ENCODE measurements at regions of chr17 and their contacts with region 1.

Region 1: GRCh38 chr17:20315821-20316220 is 151.5 kb downstream of the LGALS9B start:
- DNase-seq: no peak
- ATAC-seq: no peak
- H3K4me3 ChIP-seq: no peak overlapping the region
- H3K27ac ChIP-seq: no peak overlapping the region
- H3K4me1 ChIP-seq: no peaks in the 10 kb centered on the region
- H3K27me3 ChIP-seq: no peaks in the 10 kb centered on the region
- CTCF ChIP-seq: no peak

Region 2: GRCh38 chr17:19992803-19993713 is 322.8 kb before region 1 on chr17:
- intact Hi-C with region 1: loop called in 1 of 3 experiments (anchors 5 kb)
- DNase-seq: peak; percentile 83 to 96 (median 91)
- ATAC-seq: peak; percentile 100
- H3K4me3 ChIP-seq: no peak overlapping the region
- H3K27ac ChIP-seq: no peak overlapping the region
- H3K4me1 ChIP-seq: no peaks in the 10 kb centered on the region
- H3K27me3 ChIP-seq: no peaks in the 10 kb centered on the region
- CTCF ChIP-seq: peak; percentile 71 to 87 (median 76)

Region 3: GRCh38 chr17:20121359-20122253 is 194.2 kb before region 1 on chr17:
- intact Hi-C with region 1: loop called in 2 of 3 experiments (anchors 10 kb)
- DNase-seq: peak in 5 of 6 donors; percentile 41 to 75 (median 54)
- ATAC-seq: peak; percentile 61 to 91 (median 86)
- H3K4me3 ChIP-seq: no peak overlapping the region
- H3K27ac ChIP-seq: no peak overlapping the region
- H3K4me1 ChIP-seq: no peaks in the 10 kb centered on the region
- H3K27me3 ChIP-seq: no peaks in the 10 kb centered on the region
- CTCF ChIP-seq: peak; percentile 61 to 93 (median 78)

Region 4: DNA sequence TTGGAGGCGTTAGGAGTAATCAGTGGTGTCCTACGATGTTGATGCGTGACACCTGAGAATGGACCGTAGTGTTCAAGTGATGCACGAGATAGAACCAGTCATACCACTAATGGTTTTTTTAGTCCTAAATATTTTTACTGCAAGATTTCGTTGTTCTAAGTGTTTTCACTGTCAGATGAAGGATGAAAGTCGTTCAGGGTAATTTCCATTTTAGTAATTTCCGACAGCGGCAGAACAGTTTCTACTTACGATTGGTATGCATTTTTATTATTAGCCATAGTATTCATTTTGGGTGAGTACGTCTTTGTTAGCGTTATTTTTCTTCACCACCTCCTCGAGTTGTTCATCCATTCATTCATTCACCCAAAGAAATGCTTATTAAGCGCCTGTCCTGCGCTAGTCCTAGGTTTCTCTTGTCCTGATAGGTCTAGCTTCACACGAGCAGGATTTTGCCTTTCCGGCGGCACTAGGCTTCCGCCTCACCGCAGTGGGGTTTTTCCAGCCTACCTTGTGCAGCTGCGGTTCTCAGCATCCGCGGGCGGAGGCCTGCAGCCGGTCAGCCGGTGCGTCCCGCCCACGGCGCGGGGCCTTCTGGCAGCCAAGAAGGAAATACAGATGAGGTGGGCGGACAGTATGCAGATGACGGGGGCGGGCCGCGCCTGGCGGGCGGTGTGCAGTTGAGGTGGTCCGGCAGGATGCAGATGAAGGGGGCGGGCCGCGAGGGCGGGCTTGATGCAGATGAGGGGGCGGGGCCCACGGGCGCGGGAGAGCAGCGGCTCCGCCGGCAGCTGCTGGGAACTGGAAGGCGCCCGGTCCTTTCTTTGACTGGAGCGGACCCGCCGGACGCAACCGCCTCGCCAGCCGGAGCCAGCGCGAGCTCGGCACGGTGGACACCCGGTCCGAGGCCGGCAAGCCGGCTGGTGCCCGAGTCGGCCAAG is 160.3 kb before region 1 on chr17:
- intact Hi-C with region 1: no loop called
- DNase-seq: peak; percentile 97 to 99 (median 98)
- ATAC-seq: peak; percentile 97 to 100 (median 98)
- H3K4me3 ChIP-seq: peak overlapping the region; percentile 57 to 81 (median 70)
- H3K27ac ChIP-seq: peak overlapping the region; percentile 64 to 87 (median 80)
- H3K4me1 ChIP-seq: peaks cover 0 to 7% (median 0%) of the 10 kb centered on the region in 3 donors
- H3K27me3 ChIP-seq: no peaks in the 10 kb centered on the region
- CTCF ChIP-seq: no peak

Region 5: DNA sequence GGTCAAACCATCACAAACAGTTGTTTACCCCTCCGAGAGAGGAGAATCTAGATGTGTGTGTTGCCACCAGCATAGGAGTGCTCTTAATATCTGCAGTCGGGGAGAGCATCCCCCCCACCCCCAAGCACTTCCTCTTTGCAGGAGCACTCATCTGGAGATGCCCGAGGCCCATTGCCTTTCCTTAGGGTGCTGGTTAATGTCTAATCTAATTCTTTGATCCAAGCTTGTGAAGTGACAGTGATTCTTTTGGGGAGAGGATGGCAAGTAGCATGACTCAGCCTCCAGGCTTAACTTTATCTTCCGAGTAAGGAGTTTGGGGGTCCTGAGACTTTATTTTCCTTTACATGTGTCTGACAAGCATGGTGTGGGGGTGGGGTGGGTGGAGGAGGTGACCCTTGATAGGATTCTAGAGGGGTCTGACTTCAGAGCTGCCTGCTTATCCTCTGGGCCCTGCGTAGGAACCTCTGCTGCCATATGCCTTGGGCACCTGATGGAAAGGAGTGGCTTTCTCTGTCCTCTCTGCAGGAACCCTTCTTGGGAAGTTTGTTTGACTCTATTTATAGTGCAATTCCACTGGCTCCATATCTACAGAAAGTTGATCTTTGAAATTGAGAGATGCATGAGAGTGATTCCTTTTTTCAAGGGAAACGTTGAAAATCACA is 99.5 kb before region 1 on chr17:
- intact Hi-C with region 1: loop called in 1 of 3 experiments (anchors 5 kb)
- DNase-seq: no peak
- ATAC-seq: no peak
- H3K4me3 ChIP-seq: no peak overlapping the region
- H3K27ac ChIP-seq: no peak overlapping the region
- H3K4me1 ChIP-seq: no peaks in the 10 kb centered on the region
- H3K27me3 ChIP-seq: no peaks in the 10 kb centered on the region
- CTCF ChIP-seq: no peak